ENCODE measurements at regions of chr14 and their contacts with region 1.

Region 1: GRCh38 chr14:36647824-36648753 is 13.6 kb upstream of the PAX9 start:
- DNase-seq: no peak
- H3K4me3 Mint-ChIP-seq: no peak overlapping the region
- H3K27ac Mint-ChIP-seq: no peak overlapping the region
- H3K4me1 Mint-ChIP-seq: peaks cover 5% of the 10 kb centered on the region
- H3K27me3 Mint-ChIP-seq: peaks cover 59% of the 10 kb centered on the region

Region 2: GRCh38 chr14:36604757-36605505 is 43.2 kb before region 1 on chr14:
- CTCF ChIA-PET with region 1: no interaction called
- intact Hi-C with region 1: no loop called
- DNase-seq: peak; percentile 69
- H3K4me3 Mint-ChIP-seq: no peak overlapping the region
- H3K27ac Mint-ChIP-seq: no peak overlapping the region
- H3K4me1 Mint-ChIP-seq: no peaks in the 10 kb centered on the region
- H3K27me3 Mint-ChIP-seq: peaks cover 13% of the 10 kb centered on the region

Region 3: DNA sequence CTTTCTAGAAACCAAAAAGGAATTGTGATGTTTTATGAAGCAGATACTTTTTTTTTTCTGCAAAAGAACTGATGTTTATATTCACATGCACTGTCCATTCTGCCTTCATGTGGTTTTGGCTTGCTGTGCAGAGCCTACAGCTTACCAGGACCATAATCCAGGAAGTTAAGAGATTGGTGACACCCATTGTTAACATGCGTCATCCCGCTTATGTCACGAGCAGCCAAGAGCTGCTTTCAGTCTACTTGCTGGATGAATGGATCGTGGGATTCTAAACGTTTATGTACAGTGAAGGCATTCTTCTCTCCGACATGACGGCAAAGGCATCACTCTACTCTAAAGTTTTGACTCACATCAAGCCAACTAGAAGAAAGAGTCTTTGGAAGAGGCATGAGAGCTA is 90.2 kb after region 1 on chr14:
- CTCF ChIA-PET with region 1: no interaction called
- intact Hi-C with region 1: no loop called
- DNase-seq: no peak
- H3K4me3 Mint-ChIP-seq: no peak overlapping the region
- H3K27ac Mint-ChIP-seq: no peak overlapping the region
- H3K4me1 Mint-ChIP-seq: no peaks in the 10 kb centered on the region
- H3K27me3 Mint-ChIP-seq: peaks cover 4% of the 10 kb centered on the region

Region 4: DNA sequence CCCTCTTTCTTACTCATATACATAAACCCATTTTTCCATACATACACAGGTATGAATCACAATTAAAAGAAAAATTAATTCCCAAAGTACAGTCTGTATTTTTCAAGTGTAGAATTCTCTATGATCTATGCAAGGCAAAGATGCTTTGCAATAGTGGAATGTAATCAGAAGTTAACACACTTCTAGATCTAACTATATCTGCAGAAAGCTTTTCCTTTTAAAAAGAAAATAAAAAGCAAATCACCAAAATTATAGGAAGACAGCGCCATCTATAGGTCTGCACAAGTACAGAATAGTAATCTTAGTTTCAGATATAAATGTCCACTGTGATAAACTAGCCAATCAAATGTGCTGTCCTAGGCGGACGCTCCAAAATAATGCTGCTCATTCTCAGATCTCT is 502.3 kb after region 1 on chr14:
- CTCF ChIA-PET with region 1: interaction called, 3 read pairs
- intact Hi-C with region 1: loop called (anchors 5 kb)
- DNase-seq: no peak
- H3K4me3 Mint-ChIP-seq: no peak overlapping the region
- H3K27ac Mint-ChIP-seq: no peak overlapping the region
- H3K4me1 Mint-ChIP-seq: no peaks in the 10 kb centered on the region
- H3K27me3 Mint-ChIP-seq: peaks cover 1% of the 10 kb centered on the region